ENCODE measurements at regions of chr15 and their contacts with region 1.

Region 1: GRCh38 chr15:62378772-62379498 is 213.8 kb upstream of the C2CD4B start:
- DNase-seq: no peak
- ATAC-seq: no peak
- H3K4me3 ChIP-seq: no peak overlapping the region
- H3K27ac ChIP-seq: no peak overlapping the region
- H3K4me1 ChIP-seq: no peaks in the 10 kb centered on the region
- H3K27me3 ChIP-seq: no peaks in the 10 kb centered on the region
- CTCF ChIP-seq: no peak

Region 2: GRCh38 chr15:62173215-62173614 is 205.7 kb before region 1 on chr15:
- CTCF ChIA-PET with region 1: no interaction called
- POLR2A ChIA-PET with region 1: interaction called, 11 read pairs
- in situ Hi-C with region 1: no loop called
- intact Hi-C with region 1: no loop called
- DNase-seq: no peak
- ATAC-seq: no peak
- H3K4me3 ChIP-seq: no peak overlapping the region
- H3K27ac ChIP-seq: no peak overlapping the region
- H3K4me1 ChIP-seq: no peaks in the 10 kb centered on the region
- H3K27me3 ChIP-seq: peaks cover 13% of the 10 kb centered on the region
- CTCF ChIP-seq: no peak

Region 3: DNA sequence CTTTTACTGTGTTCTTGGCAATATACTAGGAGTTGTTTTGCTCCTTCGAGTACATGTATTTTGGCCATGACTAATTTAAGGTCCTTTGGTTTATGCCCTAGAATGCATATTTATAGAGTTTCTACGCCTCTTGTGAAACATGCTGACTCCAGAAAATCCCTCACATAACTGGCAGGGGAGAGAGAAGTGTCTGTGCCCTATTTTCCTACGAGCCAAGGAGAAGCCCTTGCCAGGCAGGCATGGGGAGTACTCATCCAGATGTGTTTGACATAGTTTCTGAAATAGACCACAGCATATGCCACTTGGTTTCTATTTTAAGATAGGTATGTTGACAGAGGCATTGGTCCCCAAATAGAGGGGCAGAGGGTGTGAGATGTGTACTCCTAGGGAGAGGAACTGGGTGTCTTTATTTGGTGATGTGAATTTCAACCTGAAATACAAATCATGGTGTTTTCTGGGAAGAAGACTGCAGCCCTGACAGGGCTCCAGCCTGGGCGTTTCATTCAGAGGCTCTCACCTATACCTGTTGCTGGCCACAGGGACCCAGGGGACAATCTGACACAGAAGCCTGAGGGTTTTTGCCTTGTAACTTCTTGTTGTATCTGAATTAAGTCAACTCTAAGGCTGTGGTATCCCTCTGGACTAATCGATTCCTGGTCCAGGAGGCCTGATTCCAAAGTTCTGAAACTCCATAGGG is 53.9 kb after region 1 on chr15:
- CTCF ChIA-PET with region 1: no interaction called
- POLR2A ChIA-PET with region 1: no interaction called
- in situ Hi-C with region 1: no loop called
- intact Hi-C with region 1: loop called (anchors 2 kb)
- DNase-seq: no peak
- ATAC-seq: no peak
- H3K4me3 ChIP-seq: no peak overlapping the region
- H3K27ac ChIP-seq: no peak overlapping the region
- H3K4me1 ChIP-seq: no peaks in the 10 kb centered on the region
- H3K27me3 ChIP-seq: no peaks in the 10 kb centered on the region
- CTCF ChIP-seq: no peak

Measured in Panc1 (cell line).